ENCODE measurements at regions of chr13 and their contacts with region 1.

Region 1: DNA sequence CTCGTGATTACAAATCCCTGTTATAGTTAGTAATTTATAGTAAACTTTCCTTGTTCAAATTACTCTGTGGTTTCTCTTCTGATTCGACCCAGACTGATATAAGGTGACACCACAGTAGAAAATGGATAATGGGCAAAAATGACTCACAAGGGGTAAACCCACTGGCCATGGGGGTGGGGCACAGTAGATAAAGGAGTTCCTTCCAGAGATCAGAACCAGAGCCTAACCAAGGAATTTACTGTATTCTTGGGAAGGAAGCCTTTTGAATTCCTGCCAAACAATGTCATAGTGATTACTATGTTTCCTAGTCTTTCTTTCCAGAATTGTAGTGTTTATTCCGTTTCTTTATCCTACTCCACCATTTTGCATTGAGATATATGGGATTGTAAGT is 21.9 kb downstream of the MIR17HG start:
- DNase-seq: no peak
- H3K4me3 Mint-ChIP-seq: no peak overlapping the region
- H3K27ac Mint-ChIP-seq: no peak overlapping the region
- H3K4me1 Mint-ChIP-seq: peaks cover 28% of the 10 kb centered on the region
- H3K27me3 Mint-ChIP-seq: peaks cover 5% of the 10 kb centered on the region

Region 2: GRCh38 chr13:91357613-91358386 is 11.6 kb before region 1 on chr13:
- intact Hi-C with region 1: loop called (anchors 1 kb)
- DNase-seq: no peak
- H3K4me3 Mint-ChIP-seq: no peak overlapping the region
- H3K27ac Mint-ChIP-seq: peak overlapping the region; percentile 43
- H3K4me1 Mint-ChIP-seq: peaks cover 47% of the 10 kb centered on the region
- H3K27me3 Mint-ChIP-seq: no peaks in the 10 kb centered on the region

Measured in activated T-helper 1 cell treated with anti-CD3 and anti-CD28 coated beads, Interleukin-12 subunit alpha, Interleukin-12 subunit beta, Interleukin-2, Interleukin-4 antibody, amounts not matched to agents 30 ng/mL and 10 ng/mL and 1 ng/mL, durations not matched to agents 14 hours and 24 hours and 36 hours (primary cell).